ENCODE measurements at regions of chr18 and their contacts with region 1.

Region 1: GRCh38 chr18:9771261-9771976 is 63.3 kb downstream of the RAB31 start:
- DNase-seq: peak; percentile 89
- ATAC-seq: peak; percentile 93

Region 2: DNA sequence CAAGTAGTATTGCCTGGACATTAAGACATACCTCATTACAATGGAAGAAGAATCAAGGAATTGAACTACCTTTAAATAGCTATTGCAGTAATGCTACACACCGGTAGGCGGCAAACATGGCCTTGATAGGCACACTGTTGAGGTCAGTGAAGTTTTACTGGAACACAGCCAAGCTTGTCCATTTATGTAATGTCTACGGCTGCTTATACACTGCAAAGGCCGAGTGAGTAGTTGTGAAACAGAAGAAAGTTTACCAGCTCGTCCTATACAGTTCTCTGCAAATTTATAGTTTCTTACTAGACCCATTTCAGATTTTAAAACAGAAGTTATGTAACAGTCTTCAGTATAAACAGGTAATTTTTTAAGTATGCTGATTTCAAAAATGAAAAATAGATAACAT is 195.9 kb before region 1 on chr18:
- intact Hi-C with region 1: loop called (anchors 5 kb)
- DNase-seq: no peak
- ATAC-seq: peak; percentile 96

Region 3: GRCh38 chr18:9614401-9615279 is 156.8 kb before region 1 on chr18 and contains the start of gene PPP4R1:
- intact Hi-C with region 1: loop called (anchors 10 kb)
- DNase-seq: peak; percentile 93
- ATAC-seq: peak; percentile 78
- total RNA-seq, gene PPP4R1: 62.5 TPM

Region 4: GRCh38 chr18:9683407-9684396 is 87.7 kb before region 1 on chr18:
- intact Hi-C with region 1: loop called (anchors 5 kb)
- DNase-seq: no peak
- ATAC-seq: peak; percentile 79

Region 5: GRCh38 chr18:9808295-9809241 is 37.1 kb after region 1 on chr18:
- intact Hi-C with region 1: no loop called
- DNase-seq: no peak
- ATAC-seq: peak; percentile 77